Activated CD4-positive, alpha-beta memory T cell treated with anti-CD3 and anti-CD28 coated beads for 36 hours (primary cell): ENCODE measurements at regions of chr1 and their contacts with region 1.

Region 1: GRCh38 chr1:112715264-112716053 is at the start of gene PPM1J:
- DNase-seq: peak; percentile 98
- H3K4me3 Mint-ChIP-seq: peak within 1 kb of the TSS; percentile 78
- H3K27ac Mint-ChIP-seq: no peak within 1 kb of the TSS
- H3K4me1 Mint-ChIP-seq: peaks cover 11% of the 10 kb centered on the region
- H3K27me3 Mint-ChIP-seq: peaks cover 11% of the 10 kb centered on the region
- total RNA-seq, gene PPM1J: 0.69 to 1.2 TPM

Region 2: GRCh38 chr1:112390775-112391602 is 324.5 kb before region 1 on chr1:
- CTCF ChIA-PET with region 1: interaction called, 68 read pairs
- POLR2A ChIA-PET with region 1: no interaction called
- intact Hi-C with region 1: loop called (anchors 2 kb)
- DNase-seq: peak; percentile 89
- H3K4me3 Mint-ChIP-seq: peak overlapping the region; percentile 55
- H3K27ac Mint-ChIP-seq: no peak overlapping the region
- H3K4me1 Mint-ChIP-seq: peaks cover 34% of the 10 kb centered on the region
- H3K27me3 Mint-ChIP-seq: peaks cover 19% of the 10 kb centered on the region

Region 3: DNA sequence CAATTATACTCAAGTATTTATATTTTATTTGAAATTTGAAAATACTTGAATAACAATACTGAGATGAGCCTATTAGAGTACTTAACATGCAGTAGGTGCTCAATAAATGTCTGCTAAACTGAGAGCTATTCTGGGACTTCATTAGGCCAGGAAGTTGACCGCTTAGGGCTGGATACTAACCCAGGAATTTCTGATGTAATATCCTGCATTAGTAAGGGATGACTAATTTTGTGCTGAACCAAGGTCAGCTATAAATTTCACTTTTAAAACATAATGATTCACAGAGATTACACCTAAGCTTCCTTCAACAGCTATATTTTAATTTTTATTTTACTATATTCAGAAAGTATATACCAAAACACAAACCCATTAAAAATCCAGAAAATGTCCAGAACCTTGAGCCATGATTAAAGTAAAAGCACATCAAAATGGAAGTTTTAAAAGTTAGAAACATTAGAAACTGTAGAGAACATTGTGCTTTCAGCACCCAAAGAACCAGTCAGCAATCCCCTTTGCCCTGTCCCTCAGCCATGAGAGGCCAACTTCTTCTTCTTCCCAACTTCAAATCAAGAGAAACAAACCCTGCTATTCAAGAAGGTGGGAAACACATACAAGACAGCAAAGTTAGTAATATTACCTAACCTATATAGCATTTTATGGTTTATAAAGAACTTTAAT is 171.3 kb before region 1 on chr1:
- CTCF ChIA-PET with region 1: no interaction called
- POLR2A ChIA-PET with region 1: no interaction called
- intact Hi-C with region 1: no loop called
- DNase-seq: no peak
- H3K4me3 Mint-ChIP-seq: no peak overlapping the region
- H3K27ac Mint-ChIP-seq: no peak overlapping the region
- H3K4me1 Mint-ChIP-seq: peaks cover 2% of the 10 kb centered on the region
- H3K27me3 Mint-ChIP-seq: no peaks in the 10 kb centered on the region

Region 4: GRCh38 chr1:112619520-112620376 is 95.7 kb before region 1 on chr1 and contains the start of gene CAPZA1:
- CTCF ChIA-PET with region 1: interaction called, 11 read pairs
- POLR2A ChIA-PET with region 1: interaction called, 7 read pairs
- intact Hi-C with region 1: no loop called
- DNase-seq: peak; percentile 95
- H3K4me3 Mint-ChIP-seq: peak within 1 kb of the TSS; percentile 96
- H3K27ac Mint-ChIP-seq: peak within 1 kb of the TSS; percentile 100
- H3K4me1 Mint-ChIP-seq: peaks cover 29% of the 10 kb centered on the region
- H3K27me3 Mint-ChIP-seq: no peaks in the 10 kb centered on the region
- total RNA-seq, gene CAPZA1: 261 to 274 TPM

Region 5: GRCh38 chr1:112744009-112744578 is 28.6 kb after region 1 on chr1:
- CTCF ChIA-PET with region 1: interaction called, 52 read pairs
- POLR2A ChIA-PET with region 1: interaction called, 4 read pairs
- intact Hi-C with region 1: no loop called
- DNase-seq: peak; percentile 17
- H3K4me3 Mint-ChIP-seq: no peak overlapping the region
- H3K27ac Mint-ChIP-seq: no peak overlapping the region
- H3K4me1 Mint-ChIP-seq: peaks cover 5% of the 10 kb centered on the region
- H3K27me3 Mint-ChIP-seq: peaks cover 54% of the 10 kb centered on the region

Region 6: DNA sequence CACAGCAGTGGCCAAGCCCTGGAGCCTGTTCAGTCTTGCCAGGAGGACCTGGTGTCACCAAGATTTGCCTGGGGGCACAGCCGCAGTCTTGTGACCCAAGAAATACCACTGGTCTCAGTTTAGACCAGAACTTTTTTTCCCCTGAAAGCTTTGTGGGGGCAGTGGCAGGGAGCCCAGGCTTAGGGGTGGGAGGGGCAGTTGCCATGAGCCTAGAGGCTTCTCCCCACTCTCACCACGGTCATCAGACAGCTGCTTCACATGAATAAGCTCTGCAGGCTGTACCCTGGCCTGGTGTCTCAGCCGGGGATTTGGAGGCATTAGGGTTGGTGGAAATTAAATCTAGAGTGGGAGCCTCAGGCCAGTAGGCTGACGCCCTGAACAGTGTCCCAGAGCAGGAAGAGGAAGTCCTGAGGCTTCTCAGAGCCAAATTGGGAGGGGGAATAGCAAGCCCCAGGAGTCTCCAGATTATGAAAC is 166.8 kb after region 1 on chr1:
- CTCF ChIA-PET with region 1: interaction called, 11 read pairs
- POLR2A ChIA-PET with region 1: no interaction called
- intact Hi-C with region 1: loop called (anchors 5 kb)
- DNase-seq: no peak
- H3K4me3 Mint-ChIP-seq: no peak overlapping the region
- H3K27ac Mint-ChIP-seq: no peak overlapping the region
- H3K4me1 Mint-ChIP-seq: no peaks in the 10 kb centered on the region
- H3K27me3 Mint-ChIP-seq: peaks cover 2% of the 10 kb centered on the region

Region 7: DNA sequence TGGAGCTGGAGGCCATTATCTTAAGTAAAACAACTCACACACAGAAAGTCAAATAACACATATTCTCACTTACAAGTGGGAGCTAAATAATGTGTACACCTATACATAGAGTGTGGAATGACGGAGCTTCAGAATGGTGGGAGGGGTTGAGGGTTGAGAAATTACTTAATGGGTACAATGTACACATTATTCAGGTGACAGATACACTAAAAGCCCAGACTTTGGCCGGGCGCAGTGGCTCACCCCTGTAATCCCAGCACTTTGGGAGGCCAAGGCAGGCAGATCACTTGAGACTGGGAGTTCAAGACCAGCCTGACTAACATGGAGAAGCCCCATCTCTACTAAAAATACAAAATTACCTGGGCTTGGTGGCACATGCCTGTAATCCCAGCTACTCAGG is 332.6 kb after region 1 on chr1:
- CTCF ChIA-PET with region 1: interaction called, 19 read pairs
- POLR2A ChIA-PET with region 1: no interaction called
- intact Hi-C with region 1: loop called (anchors 10 kb)
- DNase-seq: no peak
- H3K4me3 Mint-ChIP-seq: no peak overlapping the region
- H3K27ac Mint-ChIP-seq: no peak overlapping the region
- H3K4me1 Mint-ChIP-seq: peaks cover 17% of the 10 kb centered on the region
- H3K27me3 Mint-ChIP-seq: no peaks in the 10 kb centered on the region